Activated CD4-positive, alpha-beta T cell treated with anti-CD3 and anti-CD28 coated beads, Interleukin-2, amount 10 ng/mL, durations not matched to agents 24 days and 14 days (primary cell): ENCODE measurements at regions of chr16 and their contacts with region 1.

Region 1: GRCh38 chr16:70770626-70771552 is 30.1 kb downstream of the VAC14 start:
- DNase-seq: peak; percentile 91
- H3K4me3 Mint-ChIP-seq: no peak overlapping the region
- H3K27ac Mint-ChIP-seq: no peak overlapping the region
- H3K4me1 Mint-ChIP-seq: peaks cover 2% of the 10 kb centered on the region
- H3K27me3 Mint-ChIP-seq: no peaks in the 10 kb centered on the region

Region 2: DNA sequence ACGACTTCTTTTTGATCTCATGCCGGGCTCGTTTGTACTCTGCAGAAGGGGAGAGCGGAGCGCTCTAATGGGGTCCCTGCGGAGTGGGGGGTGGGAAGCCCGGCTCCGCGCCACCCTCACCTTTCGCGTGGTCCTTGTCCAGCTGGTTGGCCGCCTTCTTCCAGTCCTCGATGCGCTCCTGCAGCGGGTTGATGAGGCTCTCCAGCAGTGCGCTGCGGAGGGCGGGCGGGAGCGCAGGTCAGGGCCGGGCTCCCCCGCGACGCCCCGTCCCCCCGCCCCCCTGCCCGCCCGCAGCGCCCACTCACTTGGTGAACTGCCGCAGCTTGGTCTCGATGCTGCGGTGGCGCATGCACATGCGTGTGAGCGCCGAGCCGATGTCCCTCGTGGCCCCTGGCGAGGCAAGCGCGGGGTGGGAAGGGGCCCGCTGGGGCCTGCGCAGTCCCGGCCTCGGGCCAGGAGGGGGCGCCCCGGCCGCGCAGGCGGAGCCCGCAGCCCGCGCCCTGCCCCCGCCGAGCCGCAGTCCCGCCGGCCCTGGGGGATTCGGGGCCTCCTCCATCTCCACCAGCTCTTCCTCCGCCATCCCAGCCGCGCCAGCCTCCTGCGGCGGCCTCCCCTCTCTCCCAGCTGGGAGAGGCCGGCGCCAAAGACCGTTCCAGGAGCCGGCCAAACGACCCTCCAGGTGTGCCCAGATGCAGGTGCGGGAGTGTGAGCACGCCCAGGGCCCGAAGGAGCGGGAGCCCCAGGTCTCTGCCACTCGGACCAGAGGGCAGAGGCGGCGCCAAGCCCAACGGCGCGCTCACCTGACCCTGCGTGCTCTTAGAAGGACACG is 91.0 kb before region 1 on chr16:
- intact Hi-C with region 1: loop called (anchors 1 kb)
- DNase-seq: peak; percentile 64
- H3K4me3 Mint-ChIP-seq: no peak overlapping the region
- H3K27ac Mint-ChIP-seq: no peak overlapping the region
- H3K4me1 Mint-ChIP-seq: peaks cover 2% of the 10 kb centered on the region
- H3K27me3 Mint-ChIP-seq: peaks cover 15% of the 10 kb centered on the region

Region 3: DNA sequence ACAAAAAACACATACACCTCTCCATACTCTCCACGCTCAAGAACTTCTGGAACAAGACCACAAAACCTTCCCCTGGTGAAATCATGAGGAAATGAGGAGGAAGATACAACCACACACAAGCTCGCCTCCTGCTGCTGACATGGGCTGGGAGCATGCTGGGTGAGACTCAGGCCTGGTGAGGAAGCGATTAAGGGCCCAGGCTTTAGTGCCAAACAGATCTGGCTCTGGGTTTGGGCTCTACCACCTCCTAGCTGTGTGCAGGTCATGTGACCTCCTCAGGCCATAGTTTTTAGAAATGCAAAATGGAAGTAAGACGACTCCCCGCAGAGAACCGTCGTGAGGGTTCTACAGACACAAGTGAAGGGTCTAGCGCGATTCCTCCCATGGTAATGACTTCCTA is 11.2 kb before region 1 on chr16:
- intact Hi-C with region 1: no loop called
- DNase-seq: no peak
- H3K4me3 Mint-ChIP-seq: no peak overlapping the region
- H3K27ac Mint-ChIP-seq: no peak overlapping the region
- H3K4me1 Mint-ChIP-seq: no peaks in the 10 kb centered on the region
- H3K27me3 Mint-ChIP-seq: no peaks in the 10 kb centered on the region

Region 4: DNA sequence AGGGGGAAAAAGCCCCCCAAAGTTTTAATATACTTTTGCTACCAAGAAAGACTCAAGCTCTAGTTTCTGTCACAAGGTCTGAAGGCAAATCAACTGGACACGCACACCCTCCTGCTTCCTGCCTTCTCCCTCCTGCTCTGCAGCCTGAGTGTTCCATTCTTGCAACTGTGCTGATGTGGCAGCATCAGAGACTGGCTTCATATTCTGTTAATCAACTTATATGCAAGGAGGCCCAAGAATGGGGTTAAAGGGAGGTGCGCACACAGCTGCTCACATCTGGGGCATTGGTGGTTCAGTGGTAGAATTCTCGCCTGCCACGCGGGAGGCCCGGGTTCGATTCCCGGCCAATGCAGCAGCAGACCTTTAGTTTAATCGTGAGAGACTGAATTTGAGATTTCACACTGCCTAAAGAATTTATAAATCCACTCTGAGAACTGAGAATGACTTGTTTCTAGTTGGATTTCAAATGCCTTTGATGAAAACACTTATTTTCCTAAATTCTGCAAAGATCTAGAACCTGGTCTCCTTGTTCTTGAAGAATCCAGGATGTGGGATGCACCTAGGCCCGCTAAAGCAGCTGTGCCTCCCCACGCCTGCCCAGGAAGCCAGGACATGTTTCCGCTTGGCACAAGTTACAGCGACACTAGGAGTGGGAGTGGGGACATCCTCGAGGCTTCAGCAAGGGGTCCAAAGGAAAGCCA is 18.5 kb after region 1 on chr16:
- intact Hi-C with region 1: no loop called
- DNase-seq: no peak
- H3K4me3 Mint-ChIP-seq: no peak overlapping the region
- H3K27ac Mint-ChIP-seq: no peak overlapping the region
- H3K4me1 Mint-ChIP-seq: peaks cover 3% of the 10 kb centered on the region
- H3K27me3 Mint-ChIP-seq: no peaks in the 10 kb centered on the region